ENCODE measurements at regions of chr14 and their contacts with region 1.

Region 1: DNA sequence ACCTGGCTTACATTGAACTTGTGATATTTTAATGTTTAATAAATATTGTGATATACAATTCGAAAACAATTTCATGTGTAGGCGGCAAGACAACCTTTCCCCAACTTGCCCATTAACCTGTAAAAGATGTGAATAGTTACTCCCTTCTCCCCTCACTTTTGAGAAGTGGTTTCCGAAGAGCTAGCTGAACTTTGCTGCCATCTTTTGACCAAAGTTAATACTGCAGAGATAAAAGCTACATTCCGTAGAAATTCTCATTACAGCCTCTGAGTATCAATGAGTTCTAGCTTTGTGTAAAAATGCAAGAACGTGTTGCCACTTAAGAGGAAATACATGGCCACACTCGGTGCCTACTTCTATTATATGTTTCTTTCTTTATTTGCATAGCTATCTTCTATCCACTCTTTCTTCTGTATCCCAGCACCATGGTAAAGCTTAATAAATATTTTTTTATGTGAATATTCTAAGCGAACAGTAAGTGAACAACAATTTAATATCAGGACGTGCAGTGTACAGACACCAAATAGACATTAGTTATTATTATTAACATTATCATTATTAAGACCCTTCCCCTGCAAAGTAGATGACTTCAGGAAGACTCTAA is 105.1 kb upstream of the TMEM260 start:
- DNase-seq: peak; percentile 51
- CTCF ChIP-seq: peak; percentile 82

Region 2: GRCh38 chr14:55707365-55707804 is 767.1 kb before region 1 on chr14:
- in situ Hi-C with region 1: loop called (anchors 25 kb)
- DNase-seq: no peak
- CTCF ChIP-seq: peak; percentile 55

Region 3: GRCh38 chr14:56855891-56856461 is 381.5 kb after region 1 on chr14:
- in situ Hi-C with region 1: no loop called
- DNase-seq: no peak
- CTCF ChIP-seq: no peak